ENCODE measurements at regions of chr20 and their contacts with region 1.

Region 1: DNA sequence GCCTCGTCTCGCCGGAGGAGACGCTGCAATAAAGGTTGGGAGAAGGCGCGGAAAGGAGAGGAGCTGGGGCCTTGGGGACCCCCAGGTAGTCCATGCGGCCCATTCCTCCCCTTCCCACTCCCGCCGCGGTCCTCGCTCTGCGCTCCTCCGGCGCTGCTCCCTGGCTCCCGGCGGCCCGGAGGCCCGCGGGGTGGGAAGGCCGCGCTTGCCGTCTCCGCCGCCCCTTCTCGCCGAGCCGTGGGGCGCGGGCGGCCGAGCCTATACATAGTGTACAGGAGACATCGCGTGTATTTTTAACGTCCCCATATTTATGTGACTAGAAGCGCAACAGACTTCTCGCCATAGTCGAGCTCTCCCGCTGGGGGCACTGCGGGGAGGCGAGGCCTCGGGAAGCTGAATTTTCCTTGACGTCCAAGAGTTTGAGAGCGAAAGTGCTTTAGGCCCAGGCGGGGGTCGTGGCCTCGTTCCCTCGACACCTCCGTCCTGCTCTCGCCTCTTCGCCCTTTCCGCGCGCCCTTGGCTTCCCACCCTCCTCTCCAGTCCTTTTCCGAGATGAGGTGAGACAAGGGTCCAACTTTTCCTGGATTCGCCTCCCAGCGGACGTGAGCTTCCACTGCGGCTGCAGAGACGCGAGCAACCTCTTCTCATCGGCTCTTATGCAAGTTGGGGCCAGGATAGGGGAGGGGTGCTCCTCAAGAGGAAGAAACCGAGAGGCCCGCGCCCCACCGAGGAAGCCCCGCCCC is 29.0 kb downstream of the SLC12A5 start:
- DNase-seq: peak; percentile 79
- ATAC-seq: peak; percentile 68
- H3K4me3 Mint-ChIP-seq: peak overlapping the region; percentile 71
- H3K27ac Mint-ChIP-seq: no peak overlapping the region
- H3K4me1 Mint-ChIP-seq: peaks cover 30% of the 10 kb centered on the region
- H3K27me3 Mint-ChIP-seq: peaks cover 68% of the 10 kb centered on the region
- CTCF ChIP-seq: no peak

Region 2: DNA sequence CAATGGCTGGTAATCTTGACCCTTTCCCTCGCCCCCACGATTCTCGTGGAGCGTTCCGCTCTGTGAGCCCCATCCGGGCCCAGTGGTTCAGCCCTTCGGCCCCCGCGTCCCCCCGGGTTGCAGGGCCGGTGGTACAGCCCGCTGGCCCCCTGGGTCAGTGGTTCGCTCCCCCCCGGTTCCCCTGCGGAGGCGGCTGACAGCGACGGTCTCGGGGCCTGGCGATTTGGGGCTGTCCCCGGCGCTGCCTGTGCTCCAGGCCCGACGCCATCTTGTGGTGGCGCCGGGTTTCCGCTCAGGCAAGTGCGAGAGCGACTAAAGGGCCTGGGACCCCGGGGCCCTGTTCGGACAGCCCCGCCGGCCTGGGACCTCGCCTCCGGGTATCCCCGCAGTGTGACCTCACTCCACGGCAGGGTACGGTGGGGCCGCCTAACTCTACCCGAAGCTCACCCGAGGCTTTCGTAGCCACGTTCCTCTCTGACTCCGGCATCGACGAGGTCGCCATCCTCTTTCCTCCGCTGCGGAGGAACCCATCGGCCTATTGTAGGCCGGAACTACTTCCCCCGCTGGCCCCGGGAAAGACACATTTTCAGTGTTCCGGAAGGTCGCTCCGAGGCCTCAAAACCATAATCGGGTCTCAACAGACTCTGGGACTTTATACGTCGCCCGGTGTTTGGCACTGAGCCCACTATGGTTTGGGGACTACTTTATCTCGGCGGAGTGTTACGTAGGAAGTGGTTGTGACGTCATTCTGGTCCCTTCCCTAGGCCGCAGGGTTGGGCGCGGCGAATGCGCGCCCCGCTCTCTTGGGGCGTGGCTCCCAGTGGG is 86.1 kb before region 1 on chr20 and contains the start of gene ZNF335:
- CTCF ChIA-PET with region 1: interaction called, 14 read pairs
- POLR2A ChIA-PET with region 1: no interaction called
- DNase-seq: peak; percentile 94
- ATAC-seq: peak; percentile 85
- H3K4me3 Mint-ChIP-seq: peak within 1 kb of the TSS; percentile 84
- H3K27ac Mint-ChIP-seq: peak within 1 kb of the TSS; percentile 98
- H3K4me1 Mint-ChIP-seq: peaks cover 14% of the 10 kb centered on the region
- H3K27me3 Mint-ChIP-seq: no peaks in the 10 kb centered on the region; the same call in 1 of the 2 replicates
- CTCF ChIP-seq: no peak
- total RNA-seq, gene ZNF335: 16.3 to 20.0 TPM (median 16.4 TPM) in 3 replicates

Region 3: GRCh38 chr20:46013826-46014516 is 44.1 kb before region 1 on chr20:
- CTCF ChIA-PET with region 1: interaction called, 72 read pairs
- POLR2A ChIA-PET with region 1: interaction called, 4 read pairs
- DNase-seq: peak; percentile 91
- ATAC-seq: peak; percentile 60
- H3K4me3 Mint-ChIP-seq: peak overlapping the region; percentile 65
- H3K27ac Mint-ChIP-seq: no peak overlapping the region; the same call in 1 of the 2 replicates
- H3K4me1 Mint-ChIP-seq: peaks cover 39% of the 10 kb centered on the region
- H3K27me3 Mint-ChIP-seq: peaks cover 31% of the 10 kb centered on the region
- CTCF ChIP-seq: peak; percentile 83

Region 4: GRCh38 chr20:46031701-46032254 is 26.2 kb before region 1 on chr20:
- CTCF ChIA-PET with region 1: interaction called, 40 read pairs
- POLR2A ChIA-PET with region 1: interaction called, 3 read pairs
- DNase-seq: peak; percentile 71
- ATAC-seq: peak; percentile 75
- H3K4me3 Mint-ChIP-seq: peak overlapping the region; percentile 66
- H3K27ac Mint-ChIP-seq: no peak overlapping the region
- H3K4me1 Mint-ChIP-seq: peaks cover 2% of the 10 kb centered on the region; the same call in 1 of the 2 replicates
- H3K27me3 Mint-ChIP-seq: peaks cover 99% of the 10 kb centered on the region
- CTCF ChIP-seq: no peak

Region 5: GRCh38 chr20:46070215-46070900 is 12.3 kb after region 1 on chr20:
- CTCF ChIA-PET with region 1: interaction called, 15 read pairs
- POLR2A ChIA-PET with region 1: no interaction called
- DNase-seq: no peak
- ATAC-seq: no peak; the same call in 1 of the 2 replicates
- H3K4me3 Mint-ChIP-seq: no peak overlapping the region
- H3K27ac Mint-ChIP-seq: no peak overlapping the region
- H3K4me1 Mint-ChIP-seq: no peaks in the 10 kb centered on the region; the same call in none of the 2 replicates
- H3K27me3 Mint-ChIP-seq: no peaks in the 10 kb centered on the region
- CTCF ChIP-seq: no peak

Region 6: GRCh38 chr20:46099491-46100287 is 41.7 kb after region 1 on chr20:
- CTCF ChIA-PET with region 1: interaction called, 14 read pairs
- POLR2A ChIA-PET with region 1: no interaction called
- DNase-seq: peak; percentile 76
- ATAC-seq: peak; percentile 98
- H3K4me3 Mint-ChIP-seq: peak overlapping the region; percentile 37
- H3K27ac Mint-ChIP-seq: no peak overlapping the region
- H3K4me1 Mint-ChIP-seq: peaks cover 6% of the 10 kb centered on the region
- H3K27me3 Mint-ChIP-seq: peaks cover 52% of the 10 kb centered on the region
- CTCF ChIP-seq: no peak